ENCODE measurements at regions of chr10 and their contacts with region 1.

Region 1: DNA sequence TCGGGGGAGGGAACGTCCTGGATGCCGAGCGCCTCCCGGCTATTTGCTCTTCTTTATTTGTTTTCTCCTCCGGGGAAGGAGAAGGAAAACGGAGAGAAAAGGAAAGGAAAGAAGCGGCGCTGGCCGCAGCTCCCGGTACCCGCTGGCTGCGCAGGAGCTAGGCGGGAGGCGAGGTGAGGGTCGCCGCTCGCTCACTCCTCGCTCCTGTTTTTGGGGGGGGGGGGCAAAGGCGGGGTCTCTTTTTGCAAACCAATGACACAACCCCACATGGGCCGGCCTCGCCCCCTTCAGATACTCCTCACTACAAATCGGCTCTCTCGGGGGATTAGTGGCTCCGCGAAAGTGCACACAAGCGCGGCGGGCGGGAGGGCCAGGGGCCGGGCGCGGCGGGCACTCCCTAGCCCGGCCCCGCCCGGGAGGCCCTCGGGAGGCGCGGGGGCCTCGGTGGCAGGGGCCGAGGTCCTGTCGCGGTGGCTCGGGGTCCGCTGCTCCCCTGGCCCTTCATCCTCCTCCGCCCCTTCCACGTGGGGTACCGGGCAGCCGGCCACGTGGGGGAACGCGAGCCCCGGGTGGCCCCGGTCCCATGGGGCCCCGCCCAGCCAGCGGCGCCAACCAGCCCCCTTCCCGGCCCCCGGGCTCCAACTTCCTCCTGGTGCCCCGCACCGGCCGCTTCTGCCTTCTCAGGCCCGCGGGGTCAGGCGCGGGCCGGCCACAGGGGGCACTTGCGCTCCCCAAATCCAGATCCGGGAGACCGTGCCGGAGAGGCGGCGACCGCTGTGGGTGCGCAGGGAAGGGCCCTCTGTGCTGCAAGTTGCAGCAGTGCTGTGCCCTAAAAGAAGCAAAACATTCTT is 718 bp upstream of the CTBP2 start:
- DNase-seq: peak; percentile 71 to 78
- H3K4me3 ChIP-seq: peak overlapping the region; percentile 72
- H3K27ac ChIP-seq: peak overlapping the region; percentile 95
- H3K4me1 ChIP-seq: peaks cover 24% of the 10 kb centered on the region
- H3K27me3 ChIP-seq: no peaks in the 10 kb centered on the region
- CTCF ChIP-seq: peak; percentile 55; the same call in 1 of the 2 replicates

Region 2: GRCh38 chr10:124983255-124983705 is 177.8 kb before region 1 on chr10:
- CTCF ChIA-PET with region 1: no interaction called
- POLR2A ChIA-PET with region 1: no interaction called
- intact Hi-C with region 1: no loop called
- DNase-seq: no peak
- H3K4me3 ChIP-seq: no peak overlapping the region
- H3K27ac ChIP-seq: no peak overlapping the region
- H3K4me1 ChIP-seq: no peaks in the 10 kb centered on the region
- H3K27me3 ChIP-seq: no peaks in the 10 kb centered on the region
- CTCF ChIP-seq: no peak

Region 3: GRCh38 chr10:125123476-125124114 is 37.5 kb before region 1 on chr10:
- CTCF ChIA-PET with region 1: no interaction called
- POLR2A ChIA-PET with region 1: no interaction called
- intact Hi-C with region 1: loop called (anchors 5 kb)
- DNase-seq: peak; percentile 84 to 89
- H3K4me3 ChIP-seq: no peak overlapping the region
- H3K27ac ChIP-seq: peak overlapping the region; percentile 82
- H3K4me1 ChIP-seq: peaks cover 26% of the 10 kb centered on the region
- H3K27me3 ChIP-seq: no peaks in the 10 kb centered on the region
- CTCF ChIP-seq: no peak

Region 4: GRCh38 chr10:125231116-125231812 is 70.2 kb after region 1 on chr10:
- CTCF ChIA-PET with region 1: interaction called, 8 read pairs
- POLR2A ChIA-PET with region 1: interaction called, 8 read pairs
- intact Hi-C with region 1: loop called (anchors 1 kb)
- DNase-seq: peak; percentile 84 to 88
- H3K4me3 ChIP-seq: no peak overlapping the region
- H3K27ac ChIP-seq: peak overlapping the region; percentile 67
- H3K4me1 ChIP-seq: peaks cover 29% of the 10 kb centered on the region
- H3K27me3 ChIP-seq: no peaks in the 10 kb centered on the region
- CTCF ChIP-seq: no peak

Region 5: GRCh38 chr10:125283191-125283835 is 122.2 kb after region 1 on chr10:
- CTCF ChIA-PET with region 1: no interaction called
- POLR2A ChIA-PET with region 1: no interaction called
- intact Hi-C with region 1: no loop called
- DNase-seq: no peak
- H3K4me3 ChIP-seq: no peak overlapping the region
- H3K27ac ChIP-seq: no peak overlapping the region
- H3K4me1 ChIP-seq: no peaks in the 10 kb centered on the region
- H3K27me3 ChIP-seq: no peaks in the 10 kb centered on the region
- CTCF ChIP-seq: no peak

Region 6: GRCh38 chr10:125514206-125515186 is 353.4 kb after region 1 on chr10:
- CTCF ChIA-PET with region 1: no interaction called
- POLR2A ChIA-PET with region 1: no interaction called
- intact Hi-C with region 1: loop called (anchors 10 kb)
- DNase-seq: peak; percentile 78 to 82
- H3K4me3 ChIP-seq: no peak overlapping the region
- H3K27ac ChIP-seq: 0 out of 2 replicates have a peak overlapping the region, but pooled peaks have one; percentile 12
- H3K4me1 ChIP-seq: peaks cover 19% of the 10 kb centered on the region
- H3K27me3 ChIP-seq: no peaks in the 10 kb centered on the region
- CTCF ChIP-seq: no peak

Region 7: DNA sequence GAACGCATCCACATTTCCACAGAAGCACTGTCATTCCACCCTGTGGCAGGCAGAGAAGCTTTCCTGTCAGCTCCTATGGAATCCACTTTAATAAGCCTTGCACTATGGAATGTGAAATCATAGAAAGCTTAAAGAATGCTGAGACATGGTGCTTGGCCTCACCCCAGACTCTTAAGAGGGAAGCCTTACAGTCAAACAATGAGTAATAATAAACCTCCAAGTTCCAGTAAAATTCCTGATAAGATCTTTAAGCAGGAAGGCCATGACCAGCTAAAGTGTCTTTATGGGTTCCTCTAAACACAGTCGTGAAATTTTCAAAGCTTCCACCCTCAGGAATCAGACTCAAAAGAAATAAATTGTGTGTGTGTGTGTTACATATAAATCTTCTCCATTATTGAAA is 533.8 kb after region 1 on chr10:
- CTCF ChIA-PET with region 1: no interaction called
- POLR2A ChIA-PET with region 1: interaction called, 8 read pairs
- intact Hi-C with region 1: loop called (anchors 2 kb)
- DNase-seq: peak; percentile 40 to 84
- H3K4me3 ChIP-seq: no peak overlapping the region
- H3K27ac ChIP-seq: 0 out of 2 replicates have a peak overlapping the region, but pooled peaks have one; percentile 24
- H3K4me1 ChIP-seq: peaks cover 13% of the 10 kb centered on the region
- H3K27me3 ChIP-seq: no peaks in the 10 kb centered on the region
- CTCF ChIP-seq: no peak

Region 8: GRCh38 chr10:126439947-126440346 is 1278.9 kb after region 1 on chr10:
- CTCF ChIA-PET with region 1: no interaction called
- POLR2A ChIA-PET with region 1: no interaction called
- intact Hi-C with region 1: no loop called
- DNase-seq: peak; percentile 49 to 59
- H3K4me3 ChIP-seq: no peak overlapping the region
- H3K27ac ChIP-seq: peak overlapping the region; percentile 83
- H3K4me1 ChIP-seq: peaks cover 21% of the 10 kb centered on the region
- H3K27me3 ChIP-seq: no peaks in the 10 kb centered on the region
- CTCF ChIP-seq: no peak